ENCODE measurements at regions of chr2 and their contacts with region 1.

Region 1: DNA sequence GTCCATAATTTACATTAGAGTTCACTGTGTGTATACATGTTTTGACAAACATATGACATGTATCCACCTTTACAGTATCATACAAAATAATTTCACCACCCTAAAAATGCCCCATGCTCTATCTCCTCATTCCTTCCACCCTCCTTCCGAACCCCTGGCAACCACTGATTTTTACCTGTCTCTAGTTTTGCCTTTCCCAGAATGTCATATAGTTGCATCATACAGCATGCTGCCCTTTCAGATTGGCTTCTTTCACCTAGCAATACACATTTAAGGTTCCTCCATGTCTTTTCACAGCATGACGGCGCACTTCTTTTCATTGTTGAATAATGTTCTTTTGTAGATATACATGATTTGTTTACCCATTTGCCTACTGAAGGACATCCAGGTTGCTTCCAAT is 10.4 kb downstream of the LRPPRC start:
- DNase-seq: no peak
- ATAC-seq: no peak
- H3K4me3 ChIP-seq: no peak overlapping the region
- H3K27ac ChIP-seq: no peak overlapping the region
- H3K4me1 ChIP-seq: peaks cover 0 to 8% (median 0%) of the 10 kb centered on the region in 12 donors
- H3K27me3 ChIP-seq: no peaks in the 10 kb centered on the region
- CTCF ChIP-seq: no peak
- POLR2A ChIP-seq: no peak

Region 2: GRCh38 chr2:43777306-43777926 is 207.9 kb before region 1 on chr2:
- intact Hi-C with region 1: no loop called
- DNase-seq: no peak
- ATAC-seq: no peak
- H3K4me3 ChIP-seq: no peak overlapping the region
- H3K27ac ChIP-seq: no peak overlapping the region
- H3K4me1 ChIP-seq: peaks cover 0 to 14% (median 5%) of the 10 kb centered on the region in 12 donors
- H3K27me3 ChIP-seq: no peaks in the 10 kb centered on the region
- CTCF ChIP-seq: no peak
- POLR2A ChIP-seq: no peak

Region 3: GRCh38 chr2:43905371-43905803 is 80.0 kb before region 1 on chr2:
- intact Hi-C with region 1: no loop called
- DNase-seq: no peak
- ATAC-seq: no peak
- H3K4me3 ChIP-seq: no peak overlapping the region
- H3K27ac ChIP-seq: no peak overlapping the region
- H3K4me1 ChIP-seq: no peaks in the 10 kb centered on the region
- H3K27me3 ChIP-seq: no peaks in the 10 kb centered on the region
- CTCF ChIP-seq: no peak
- POLR2A ChIP-seq: no peak

Region 4: GRCh38 chr2:43934567-43934966 is 50.8 kb before region 1 on chr2:
- intact Hi-C with region 1: loop called in 1 of 10 experiments (anchors 10 kb)
- DNase-seq: no peak
- ATAC-seq: no peak
- H3K4me3 ChIP-seq: no peak overlapping the region
- H3K27ac ChIP-seq: no peak overlapping the region
- H3K4me1 ChIP-seq: no peaks in the 10 kb centered on the region
- H3K27me3 ChIP-seq: no peaks in the 10 kb centered on the region
- CTCF ChIP-seq: no peak
- POLR2A ChIP-seq: no peak

Region 5: DNA sequence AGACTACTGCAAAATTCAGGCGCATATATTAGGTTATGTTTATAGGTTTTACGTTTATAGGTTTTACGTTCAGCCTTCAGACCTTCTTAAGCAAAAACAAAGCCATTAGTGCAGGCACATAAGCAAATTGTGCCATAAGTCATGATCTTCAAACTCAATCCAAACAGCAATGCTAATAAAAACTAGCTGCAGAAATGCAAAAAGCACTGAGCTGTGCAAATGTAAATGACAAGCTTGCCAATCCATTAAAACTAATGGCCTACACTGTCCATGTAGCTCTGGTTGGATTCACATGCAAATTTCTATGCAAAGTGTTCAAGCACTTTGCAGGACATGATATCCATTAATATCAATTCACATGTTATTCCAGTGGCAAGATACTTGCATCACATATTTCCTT is 40.4 kb before region 1 on chr2:
- intact Hi-C with region 1: loop called in 1 of 10 experiments (anchors 5 kb)
- DNase-seq: no peak
- ATAC-seq: no peak
- H3K4me3 ChIP-seq: no peak overlapping the region
- H3K27ac ChIP-seq: no peak overlapping the region
- H3K4me1 ChIP-seq: no peaks in the 10 kb centered on the region
- H3K27me3 ChIP-seq: no peaks in the 10 kb centered on the region
- CTCF ChIP-seq: no peak
- POLR2A ChIP-seq: no peak

Measured in heart left ventricle (tissue), 16 donors.